ENCODE measurements at regions of chr12 and their contacts with region 1.

Region 1: DNA sequence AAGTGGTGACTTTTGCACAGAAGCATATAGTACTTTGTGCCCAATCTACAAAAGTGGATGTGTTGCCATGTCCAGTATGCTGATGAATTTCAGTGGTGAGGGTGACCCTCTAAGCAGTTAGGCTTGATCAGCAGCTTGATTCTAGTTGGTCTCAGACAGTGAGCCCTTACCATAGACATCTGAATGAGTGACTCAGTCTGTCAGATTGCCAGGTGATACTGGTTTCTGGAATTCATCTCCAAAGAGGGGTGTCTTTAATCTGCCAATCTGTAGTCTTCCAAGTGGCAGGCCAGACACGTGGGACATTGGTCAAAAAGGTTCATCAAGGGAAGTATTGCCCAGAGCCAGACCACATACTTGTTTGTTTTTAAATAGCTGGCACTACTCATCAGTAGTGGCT is 187.4 kb upstream of the SLC16A7 start:
- DNase-seq: no peak
- ATAC-seq: no peak
- H3K4me3 ChIP-seq: no peak overlapping the region
- H3K27ac ChIP-seq: no peak overlapping the region
- H3K4me1 ChIP-seq: no peaks in the 10 kb centered on the region
- H3K27me3 ChIP-seq: no peaks in the 10 kb centered on the region
- CTCF ChIP-seq: no peak
- EP300 ChIP-seq: no peak
- POLR2A ChIP-seq: no peak
- RAD21 ChIP-seq: no peak

Region 2: DNA sequence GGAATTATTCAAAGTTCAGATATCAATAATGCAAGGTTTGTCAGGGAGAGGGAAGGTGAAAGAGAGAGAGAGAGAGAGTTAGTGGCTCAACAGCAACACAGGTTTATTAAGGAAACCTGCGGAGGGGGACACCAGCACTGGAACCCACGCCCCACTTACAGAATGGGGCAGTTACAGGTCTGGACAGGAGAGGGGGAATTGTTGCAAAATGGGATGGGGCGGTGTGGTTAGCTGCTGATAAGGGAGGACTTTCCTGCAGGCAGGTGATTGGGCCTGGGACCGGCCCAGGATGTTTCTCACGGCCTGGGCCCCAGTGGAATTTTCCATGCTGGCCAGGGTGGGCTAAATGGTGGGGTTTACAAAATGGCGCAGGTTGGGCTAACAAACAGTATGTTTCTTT is 90.8 kb before region 1 on chr12:
- CTCF ChIA-PET with region 1: no interaction called
- POLR2A ChIA-PET with region 1: no interaction called
- in situ Hi-C with region 1: no loop called
- intact Hi-C with region 1: loop called (anchors 2 kb)
- DNase-seq: no peak
- ATAC-seq: no peak
- H3K4me3 ChIP-seq: no peak overlapping the region
- H3K27ac ChIP-seq: no peak overlapping the region
- H3K4me1 ChIP-seq: no peaks in the 10 kb centered on the region
- H3K27me3 ChIP-seq: no peaks in the 10 kb centered on the region
- CTCF ChIP-seq: no peak
- EP300 ChIP-seq: no peak
- POLR2A ChIP-seq: no peak
- RAD21 ChIP-seq: no peak

Measured in HepG2 (cell line).